ENCODE measurements at regions of chr11 and their contacts with region 1.

Region 1: DNA sequence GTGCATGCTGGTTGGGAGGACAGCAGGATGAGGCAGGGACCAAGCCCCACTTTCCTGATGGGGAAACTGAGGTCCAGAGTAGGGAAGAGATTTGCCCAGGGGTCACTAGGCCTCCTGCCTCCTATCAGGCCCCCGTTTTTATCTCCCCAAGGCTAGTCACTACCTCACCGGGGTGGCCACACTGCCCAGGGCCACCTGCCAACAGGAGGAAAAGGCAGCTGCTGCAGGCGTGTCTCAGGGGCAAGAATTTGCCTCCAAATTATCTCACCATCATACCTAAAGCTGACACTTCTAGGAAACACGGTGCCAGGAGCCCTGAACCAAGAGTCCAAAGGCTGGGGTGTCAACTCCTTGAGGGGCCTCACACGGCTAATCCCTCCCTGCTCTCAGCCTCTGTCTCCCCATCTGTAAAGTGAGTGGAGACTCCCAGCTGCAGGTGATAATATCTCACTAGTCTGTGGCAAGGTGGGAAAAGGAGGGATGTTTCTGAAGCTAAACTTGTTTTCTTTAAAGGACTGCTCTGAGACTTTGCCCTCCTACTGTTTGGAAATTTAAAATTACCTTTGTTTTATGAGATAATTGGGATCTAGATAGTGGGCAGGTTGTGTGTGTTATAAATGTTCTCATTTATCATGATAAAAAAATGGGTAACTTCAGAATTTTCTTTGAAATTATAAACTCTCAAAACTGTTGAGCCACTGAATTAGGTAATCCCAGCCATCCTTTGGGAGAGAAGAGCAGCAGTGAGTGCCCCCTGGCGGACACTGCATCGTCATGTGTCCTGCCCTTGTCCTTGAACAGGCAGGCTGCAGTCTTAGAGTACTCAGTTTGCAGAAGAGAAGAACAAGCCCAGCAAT is 60.0 kb downstream of the MYO7A start:
- DNase-seq: peak; percentile 54 to 83
- ATAC-seq: peak; percentile 71 to 90 (median 87)
- H3K4me3 ChIP-seq: no peak overlapping the region
- H3K4me3 Mint-ChIP-seq: no peak overlapping the region
- H3K27ac ChIP-seq: no peak overlapping the region
- H3K27ac Mint-ChIP-seq: no peak overlapping the region
- H3K4me1 ChIP-seq: no peaks in the 10 kb centered on the region
- H3K4me1 Mint-ChIP-seq: no peaks in the 10 kb centered on the region
- H3K27me3 ChIP-seq: no peaks in the 10 kb centered on the region
- H3K27me3 Mint-ChIP-seq: no peaks in the 10 kb centered on the region
- CTCF ChIP-seq: peak; percentile 89

Region 2: GRCh38 chr11:76919887-76920746 is 267.9 kb before region 1 on chr11:
- intact Hi-C with region 1: no loop called
- DNase-seq: peak; percentile 36 to 86
- ATAC-seq: peak; percentile 75 to 84 (median 78)
- H3K4me3 ChIP-seq: no peak overlapping the region
- H3K4me3 Mint-ChIP-seq: peak overlapping the region; percentile 75
- H3K27ac ChIP-seq: no peak overlapping the region
- H3K27ac Mint-ChIP-seq: peak overlapping the region in 1 of 2 donors; percentile 35
- H3K4me1 ChIP-seq: peaks cover 4% of the 10 kb centered on the region
- H3K4me1 Mint-ChIP-seq: peaks cover 11 to 12% of the 10 kb centered on the region in 2 donors
- H3K27me3 ChIP-seq: no peaks in the 10 kb centered on the region
- H3K27me3 Mint-ChIP-seq: no peaks in the 10 kb centered on the region
- CTCF ChIP-seq: peak; percentile 89

Region 3: DNA sequence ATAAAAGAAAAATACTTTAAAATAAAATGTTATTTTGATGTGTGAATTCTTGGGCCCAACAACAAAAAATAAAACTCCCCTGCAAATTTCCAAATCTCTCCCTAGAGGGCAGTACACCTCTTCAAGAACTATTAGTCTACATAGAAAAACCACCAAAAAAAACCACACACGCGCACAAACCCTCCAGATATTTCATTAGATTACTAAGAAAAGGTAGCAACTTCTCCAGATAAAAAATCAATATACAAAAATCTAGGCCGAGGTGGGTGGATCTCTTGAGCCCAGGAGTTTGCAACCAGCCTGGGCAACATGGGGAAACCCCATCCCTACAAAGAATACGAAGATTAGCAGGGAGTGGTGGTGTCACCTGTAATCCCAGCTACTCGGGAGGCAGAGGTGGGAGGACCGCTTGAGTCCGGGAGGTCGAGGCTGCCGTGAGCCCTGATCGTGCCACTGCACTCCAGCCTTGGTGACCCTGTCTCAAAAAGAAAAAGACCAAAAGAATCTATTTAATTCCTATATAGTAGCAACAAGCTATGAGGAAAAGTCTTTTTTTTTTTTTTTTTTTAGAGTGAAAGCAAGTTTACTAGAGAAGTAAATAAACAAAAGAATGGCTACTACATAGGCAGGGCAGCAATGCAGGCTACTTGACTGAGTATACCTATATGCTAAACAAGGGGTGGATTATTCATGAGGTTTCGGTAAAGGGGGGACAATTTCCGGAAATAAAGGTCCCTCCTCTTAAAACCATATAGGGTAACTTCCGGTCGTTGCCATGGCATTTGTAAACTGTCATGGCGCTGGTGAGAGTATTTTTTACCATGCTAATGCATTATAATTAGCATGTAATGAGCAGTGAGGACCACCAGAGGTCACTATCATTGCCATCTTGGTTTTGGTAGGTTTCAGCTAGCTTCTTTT is 140.7 kb before region 1 on chr11:
- intact Hi-C with region 1: loop called (anchors 1 kb)
- DNase-seq: peak; percentile 57 to 97
- ATAC-seq: peak; percentile 89 to 92 (median 92)
- H3K4me3 ChIP-seq: peak overlapping the region; percentile 36
- H3K4me3 Mint-ChIP-seq: peak overlapping the region; percentile 83
- H3K27ac ChIP-seq: peak overlapping the region; percentile 7
- H3K27ac Mint-ChIP-seq: peak overlapping the region; percentile 47 to 74
- H3K4me1 ChIP-seq: peaks cover 7% of the 10 kb centered on the region
- H3K4me1 Mint-ChIP-seq: peaks cover 13 to 20% of the 10 kb centered on the region in 2 donors
- H3K27me3 ChIP-seq: peaks cover 7% of the 10 kb centered on the region
- H3K27me3 Mint-ChIP-seq: peaks cover 18 to 23% of the 10 kb centered on the region in 2 donors
- CTCF ChIP-seq: peak; percentile 62

Region 4: GRCh38 chr11:77127232-77127911 is 60.6 kb before region 1 on chr11:
- intact Hi-C with region 1: loop called (anchors 1 kb)
- DNase-seq: peak; percentile 62 to 74
- ATAC-seq: peak; percentile 65 to 86 (median 83)
- H3K4me3 ChIP-seq: peak overlapping the region; percentile 24
- H3K4me3 Mint-ChIP-seq: no peak overlapping the region
- H3K27ac ChIP-seq: no peak overlapping the region
- H3K27ac Mint-ChIP-seq: no peak overlapping the region
- H3K4me1 ChIP-seq: peaks cover 17% of the 10 kb centered on the region
- H3K4me1 Mint-ChIP-seq: peaks cover 0 to 16% of the 10 kb centered on the region in 2 donors
- H3K27me3 ChIP-seq: peaks cover 11% of the 10 kb centered on the region
- H3K27me3 Mint-ChIP-seq: peaks cover 9 to 12% of the 10 kb centered on the region in 2 donors
- CTCF ChIP-seq: peak; percentile 96

Region 5: GRCh38 chr11:77147668-77148321 is 40.2 kb before region 1 on chr11:
- intact Hi-C with region 1: no loop called
- DNase-seq: peak in 1 of 2 donors; percentile 59
- ATAC-seq: peak; percentile 40 to 71 (median 60)
- H3K4me3 ChIP-seq: no peak overlapping the region
- H3K4me3 Mint-ChIP-seq: peak overlapping the region; percentile 75
- H3K27ac ChIP-seq: no peak overlapping the region
- H3K27ac Mint-ChIP-seq: peak overlapping the region in 1 of 2 donors; percentile 29
- H3K4me1 ChIP-seq: peaks cover 36% of the 10 kb centered on the region
- H3K4me1 Mint-ChIP-seq: peaks cover 28 to 49% of the 10 kb centered on the region in 2 donors
- H3K27me3 ChIP-seq: no peaks in the 10 kb centered on the region
- H3K27me3 Mint-ChIP-seq: peaks cover 24 to 27% of the 10 kb centered on the region in 2 donors
- CTCF ChIP-seq: no peak

Region 6: GRCh38 chr11:77547863-77548551 is 360.0 kb after region 1 on chr11:
- intact Hi-C with region 1: loop called (anchors 2 kb)
- DNase-seq: peak in 1 of 2 donors; percentile 75
- ATAC-seq: peak in 2 of 3 donors; percentile 49 to 53
- H3K4me3 ChIP-seq: no peak overlapping the region
- H3K4me3 Mint-ChIP-seq: no peak overlapping the region
- H3K27ac ChIP-seq: no peak overlapping the region
- H3K27ac Mint-ChIP-seq: no peak overlapping the region
- H3K4me1 ChIP-seq: no peaks in the 10 kb centered on the region
- H3K4me1 Mint-ChIP-seq: peaks cover 7 to 9% of the 10 kb centered on the region in 2 donors
- H3K27me3 ChIP-seq: no peaks in the 10 kb centered on the region
- H3K27me3 Mint-ChIP-seq: no peaks in the 10 kb centered on the region
- CTCF ChIP-seq: peak; percentile 59